ENCODE measurements at regions of chr6 and their contacts with region 1.

Region 1: GRCh38 chr6:111709615-111710398 is 104.1 kb upstream of the TRAF3IP2 start:
- DNase-seq: peak in 1 of 2 donors; percentile 82
- H3K4me3 ChIP-seq: no peak overlapping the region
- H3K27ac ChIP-seq: peak overlapping the region; percentile 56
- H3K4me1 ChIP-seq: peaks cover 34% of the 10 kb centered on the region
- H3K27me3 ChIP-seq: no peaks in the 10 kb centered on the region
- CTCF ChIP-seq: peak; percentile 75 to 91 (median 77)
- POLR2A ChIP-seq: no peak

Region 2: DNA sequence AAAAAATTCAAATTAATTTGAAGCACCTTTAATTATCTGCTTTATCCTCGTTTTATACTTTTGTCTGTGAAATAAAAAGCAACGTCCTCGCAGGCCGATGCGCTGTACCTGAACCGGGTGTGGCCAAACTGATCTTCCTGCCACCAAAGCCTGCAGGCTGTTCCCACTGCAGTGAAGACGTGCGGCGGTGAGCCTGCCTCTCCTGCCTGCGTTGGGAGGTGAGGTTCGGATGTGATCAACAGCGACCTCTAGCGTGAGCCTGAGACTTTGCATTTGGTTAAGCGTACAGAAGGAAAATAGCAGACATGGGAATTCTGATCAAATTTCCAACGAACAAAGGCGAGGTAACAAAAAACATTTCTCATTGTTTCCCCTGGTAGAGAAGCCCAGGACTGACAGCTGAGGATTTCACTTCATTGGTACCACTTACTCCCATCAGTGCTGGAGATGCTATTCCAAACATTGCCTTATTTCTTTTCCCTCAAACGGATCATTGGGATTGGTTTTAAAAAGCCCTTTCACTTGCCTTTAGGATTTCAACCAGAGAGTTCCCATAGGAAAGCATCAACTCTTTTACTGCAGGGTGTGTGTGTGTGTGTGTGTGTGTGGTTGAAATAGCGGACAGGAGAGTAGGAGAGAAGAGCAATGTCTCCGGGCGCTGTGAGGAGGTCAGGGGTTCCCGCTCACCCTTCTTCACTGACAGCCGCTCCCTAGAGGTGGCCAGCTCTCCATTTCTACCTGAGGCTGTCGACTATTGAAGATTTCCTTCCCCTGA is 287.5 kb after region 1 on chr6:
- intact Hi-C with region 1: loop called (anchors 5 kb)
- DNase-seq: no peak
- H3K4me3 ChIP-seq: peak overlapping the region in 1 of 2 donors; percentile 16
- H3K27ac ChIP-seq: no peak overlapping the region
- H3K4me1 ChIP-seq: no peaks in the 10 kb centered on the region
- H3K27me3 ChIP-seq: no peaks in the 10 kb centered on the region
- CTCF ChIP-seq: peak; percentile 74 to 93 (median 83)
- POLR2A ChIP-seq: no peak

Region 3: GRCh38 chr6:112043032-112044007 is 333.5 kb after region 1 on chr6:
- intact Hi-C with region 1: loop called (anchors 5 kb)
- DNase-seq: no peak
- H3K4me3 ChIP-seq: peak overlapping the region; percentile 58 to 60
- H3K27ac ChIP-seq: peak overlapping the region; percentile 88
- H3K4me1 ChIP-seq: peaks cover 15% of the 10 kb centered on the region
- H3K27me3 ChIP-seq: no peaks in the 10 kb centered on the region
- CTCF ChIP-seq: peak; percentile 82 to 96 (median 92)
- POLR2A ChIP-seq: peak in 1 of 2 donors; percentile 22